IMR-90 (cell line): ENCODE measurements at regions of chr6 and their contacts with region 1.

Region 1: DNA sequence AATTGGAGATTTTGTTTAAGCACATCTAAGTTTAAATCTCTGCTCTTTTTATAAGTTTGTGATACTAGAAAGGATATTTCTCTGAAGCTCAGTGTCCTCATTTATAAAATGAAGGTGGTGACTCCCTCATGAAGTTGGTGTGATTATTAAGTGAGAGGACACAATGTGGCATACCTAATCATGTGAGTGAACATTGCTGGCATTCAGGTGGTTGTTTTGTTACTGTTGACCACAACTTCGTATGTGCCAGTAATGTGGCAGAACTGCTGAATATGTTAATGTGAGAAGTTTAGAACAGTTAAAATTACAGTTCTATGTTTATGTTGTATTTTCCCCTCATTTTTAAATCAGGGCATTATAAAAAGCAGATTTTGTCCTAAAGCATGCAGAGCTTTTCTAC is 127.2 kb downstream of the STXBP5 start:
- DNase-seq: no peak
- ATAC-seq: no peak
- H3K4me3 ChIP-seq: no peak overlapping the region
- H3K27ac ChIP-seq: no peak overlapping the region
- H3K4me1 ChIP-seq: no peaks in the 10 kb centered on the region
- H3K27me3 ChIP-seq: no peaks in the 10 kb centered on the region
- CTCF ChIP-seq: no peak
- POLR2A ChIP-seq: no peak
- RAD21 ChIP-seq: no peak

Region 2: DNA sequence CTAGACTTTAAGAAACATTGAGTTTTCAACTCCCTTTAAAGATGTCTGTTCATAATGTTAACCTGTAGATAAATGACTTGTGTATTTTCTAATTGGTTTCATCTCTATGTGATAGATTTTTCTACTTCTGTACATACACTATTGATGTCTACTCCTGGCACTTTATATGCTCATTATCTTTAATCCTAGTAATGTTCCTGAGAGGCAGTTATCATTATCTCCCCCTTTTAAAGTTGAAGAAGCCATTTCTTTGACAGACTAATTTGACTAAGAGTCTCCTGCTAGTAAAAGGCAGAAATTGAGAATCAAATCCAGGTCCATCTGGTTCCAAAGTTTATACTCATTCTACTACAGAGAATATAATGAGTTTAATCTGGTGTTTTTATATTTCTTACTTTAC is 39.9 kb after region 1 on chr6:
- CTCF ChIA-PET with region 1: no interaction called
- POLR2A ChIA-PET with region 1: no interaction called
- dilution Hi-C with region 1: no loop called
- in situ Hi-C with region 1: no loop called
- intact Hi-C with region 1: loop called (anchors 5 kb)
- DNase-seq: no peak
- ATAC-seq: no peak
- H3K4me3 ChIP-seq: no peak overlapping the region
- H3K27ac ChIP-seq: no peak overlapping the region
- H3K4me1 ChIP-seq: no peaks in the 10 kb centered on the region
- H3K27me3 ChIP-seq: no peaks in the 10 kb centered on the region
- CTCF ChIP-seq: no peak
- POLR2A ChIP-seq: no peak
- RAD21 ChIP-seq: no peak